ENCODE measurements at regions of chr11 and their contacts with region 1.

Region 1: GRCh38 chr11:33362051-33362910 is 105.1 kb downstream of the HIPK3 start:
- DNase-seq: no peak
- H3K4me3 ChIP-seq: no peak overlapping the region
- H3K27ac ChIP-seq: no peak overlapping the region
- H3K4me1 ChIP-seq: peaks cover 0 to 4% (median 1%) of the 10 kb centered on the region in 4 donors
- H3K27me3 ChIP-seq: peaks cover 8% of the 10 kb centered on the region
- CTCF ChIP-seq: peak; percentile 65 to 78 (median 68)
- EP300 ChIP-seq: no peak
- POLR2A ChIP-seq: no peak

Region 2: DNA sequence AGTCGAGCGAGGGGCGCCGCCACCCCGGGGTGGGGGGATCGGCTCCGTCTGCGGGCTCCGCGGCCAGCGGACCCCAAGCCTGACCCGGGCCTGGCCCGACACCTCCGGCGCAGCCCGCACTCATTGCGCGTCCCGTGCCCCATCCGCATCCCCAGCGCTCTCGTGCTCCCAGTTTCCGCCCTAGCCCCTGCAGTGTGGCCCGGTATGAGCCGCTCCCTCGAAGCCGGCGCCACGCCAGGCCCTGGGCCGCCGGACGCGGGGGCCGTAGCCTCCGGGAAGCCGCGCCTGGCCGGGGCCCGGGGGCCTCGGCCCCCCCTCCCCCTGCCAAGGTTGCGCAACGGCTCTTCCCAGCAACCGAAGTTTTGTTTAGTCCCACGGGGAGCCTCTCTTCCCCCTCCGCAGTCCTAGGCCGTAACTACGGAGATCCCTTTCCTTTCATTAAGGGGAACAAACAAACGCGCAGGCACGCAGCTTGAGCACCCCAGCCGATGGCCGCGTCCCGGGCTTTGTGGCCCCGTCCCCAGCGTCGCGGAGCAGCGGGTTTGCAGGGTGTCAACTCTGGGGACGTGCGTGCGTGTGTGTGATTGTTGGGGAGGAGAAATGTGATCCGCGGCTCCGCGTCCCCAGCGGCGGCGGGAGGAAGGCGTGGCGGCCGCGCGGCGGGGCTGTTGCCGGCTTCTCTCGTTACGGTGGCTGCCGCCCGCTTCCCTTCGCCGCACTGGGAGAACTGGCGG is 104.2 kb before region 1 on chr11:
- in situ Hi-C with region 1: no loop called
- intact Hi-C with region 1: no loop called
- DNase-seq: peak; percentile 84
- H3K4me3 ChIP-seq: peak overlapping the region; percentile 84 to 99 (median 88)
- H3K27ac ChIP-seq: peak overlapping the region; percentile 99 to 100 (median 100)
- H3K4me1 ChIP-seq: peaks cover 9 to 46% (median 31%) of the 10 kb centered on the region in 4 donors
- H3K27me3 ChIP-seq: no peaks in the 10 kb centered on the region
- CTCF ChIP-seq: peak; percentile 19 to 71 (median 43)
- EP300 ChIP-seq: peak; percentile 10
- POLR2A ChIP-seq: peak; percentile 86

Region 3: GRCh38 chr11:33687733-33688479 is 325.6 kb after region 1 on chr11:
- in situ Hi-C with region 1: loop called (anchors 10 to 25 kb)
- intact Hi-C with region 1: no loop called
- DNase-seq: no peak
- H3K4me3 ChIP-seq: no peak overlapping the region
- H3K27ac ChIP-seq: no peak overlapping the region
- H3K4me1 ChIP-seq: peaks cover 15 to 37% (median 30%) of the 10 kb centered on the region in 4 donors
- H3K27me3 ChIP-seq: no peaks in the 10 kb centered on the region
- CTCF ChIP-seq: peak; percentile 49 to 67 (median 51)
- EP300 ChIP-seq: no peak
- POLR2A ChIP-seq: no peak

Region 4: GRCh38 chr11:33742249-33742851 is 380.1 kb after region 1 on chr11:
- in situ Hi-C with region 1: loop called in 1 of 4 experiments (anchors 10 kb)
- intact Hi-C with region 1: no loop called
- DNase-seq: no peak
- H3K4me3 ChIP-seq: no peak overlapping the region
- H3K27ac ChIP-seq: no peak overlapping the region
- H3K4me1 ChIP-seq: peaks cover 0 to 2% (median under 1%) of the 10 kb centered on the region in 4 donors
- H3K27me3 ChIP-seq: no peaks in the 10 kb centered on the region
- CTCF ChIP-seq: peak; percentile 41 to 56 (median 46)
- EP300 ChIP-seq: no peak
- POLR2A ChIP-seq: no peak

Region 5: DNA sequence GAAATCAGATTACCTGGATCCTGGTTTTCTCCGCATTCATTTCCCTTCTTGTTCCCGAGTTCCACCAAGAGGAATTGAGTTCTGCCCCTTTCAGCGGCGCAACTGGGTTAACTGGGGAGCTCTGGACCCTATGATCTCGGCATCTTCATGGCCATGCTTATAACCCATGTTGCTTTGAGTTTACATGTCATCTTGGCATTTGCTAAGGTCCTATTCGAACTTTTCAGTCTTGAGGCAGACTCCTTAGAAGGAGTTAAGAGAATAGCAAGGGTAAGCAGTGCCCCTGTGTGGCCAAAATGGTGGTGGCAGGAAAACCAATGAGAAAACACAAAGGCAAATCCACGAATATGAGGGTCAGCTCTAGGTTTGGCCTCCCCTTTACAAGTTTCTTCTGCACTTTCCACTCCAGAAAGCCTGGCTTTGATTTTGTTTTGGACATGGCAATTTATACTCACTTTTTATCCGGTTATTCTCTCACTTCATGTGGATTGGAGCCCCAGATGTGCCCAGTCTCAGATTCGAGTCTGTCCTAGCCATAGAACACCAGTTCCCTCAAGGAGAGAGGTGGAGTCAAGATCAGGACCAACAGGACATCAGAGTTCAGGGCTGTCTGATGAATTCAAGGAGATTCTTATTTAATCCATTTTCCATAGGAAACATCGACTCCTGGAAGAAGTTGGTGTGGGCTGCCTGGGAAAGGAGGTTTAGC is 467.3 kb after region 1 on chr11:
- in situ Hi-C with region 1: loop called in 2 of 4 experiments (anchors 10 to 25 kb)
- intact Hi-C with region 1: no loop called
- DNase-seq: peak; percentile 55
- H3K4me3 ChIP-seq: peak overlapping the region in 3 of 4 donors; percentile 15 to 47 (median 32)
- H3K27ac ChIP-seq: no peak overlapping the region
- H3K4me1 ChIP-seq: peaks cover 7 to 10% (median 8%) of the 10 kb centered on the region in 4 donors
- H3K27me3 ChIP-seq: peaks cover 69% of the 10 kb centered on the region
- CTCF ChIP-seq: peak; percentile 68 to 73 (median 69)
- EP300 ChIP-seq: no peak
- POLR2A ChIP-seq: no peak